ENCODE measurements at regions of chr11 and their contacts with region 1.

Region 1: GRCh38 chr11:94543695-94544645 is at the start of gene FUT4:
- DNase-seq: peak; percentile 87
- ATAC-seq: peak; percentile 83
- H3K4me3 Mint-ChIP-seq: peak within 1 kb of the TSS; percentile 92
- H3K27ac Mint-ChIP-seq: peak within 1 kb of the TSS; percentile 99
- H3K4me1 Mint-ChIP-seq: peaks cover 39% of the 10 kb centered on the region
- H3K27me3 Mint-ChIP-seq: no peaks in the 10 kb centered on the region
- total RNA-seq, gene FUT4: 4.4 to 4.9 TPM

Region 2: DNA sequence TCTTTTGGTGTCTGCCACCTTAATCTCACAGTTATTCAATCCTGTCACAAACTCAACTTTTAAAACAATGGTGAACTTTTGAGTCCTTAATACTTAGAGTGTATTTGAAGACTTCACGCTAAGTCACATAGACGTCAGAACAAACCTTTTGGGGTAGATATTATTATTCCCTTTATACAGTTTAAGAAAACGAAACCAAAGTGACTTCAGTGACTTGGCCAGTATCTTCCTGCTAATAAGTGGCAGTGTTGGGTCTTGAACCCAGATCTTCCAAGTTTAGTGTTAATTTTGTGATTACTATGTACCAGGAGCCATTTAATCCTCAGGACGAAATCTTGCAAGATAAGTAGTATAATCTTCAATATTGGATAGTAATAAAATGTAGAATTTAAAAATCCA is 881.8 kb before region 1 on chr11:
- CTCF ChIA-PET with region 1: no interaction called
- POLR2A ChIA-PET with region 1: no interaction called
- intact Hi-C with region 1: loop called in 1 of 2 experiments (anchors 5 kb)
- DNase-seq: no peak
- ATAC-seq: no peak
- H3K4me3 Mint-ChIP-seq: peak overlapping the region; percentile 94
- H3K27ac Mint-ChIP-seq: peak overlapping the region; percentile 95
- H3K4me1 Mint-ChIP-seq: peaks cover 44% of the 10 kb centered on the region
- H3K27me3 Mint-ChIP-seq: no peaks in the 10 kb centered on the region

Region 3: GRCh38 chr11:94493281-94494125 is 50.5 kb before region 1 on chr11 and contains the starts of genes ANKRD49 and MRE11:
- CTCF ChIA-PET with region 1: no interaction called
- POLR2A ChIA-PET with region 1: no interaction called
- intact Hi-C with region 1: loop called (anchors 1 to 5 kb)
- DNase-seq: peak; percentile 97
- ATAC-seq: peak; percentile 100
- H3K4me3 Mint-ChIP-seq: peak within 1 kb of the TSS; percentile 94
- H3K27ac Mint-ChIP-seq: peak within 1 kb of the TSS; percentile 97
- H3K4me1 Mint-ChIP-seq: peaks cover 24% of the 10 kb centered on the region
- H3K27me3 Mint-ChIP-seq: no peaks in the 10 kb centered on the region
- total RNA-seq, gene ANKRD49: 20.8 to 22.4 TPM
- total RNA-seq, gene MRE11: 36.8 to 51.3 TPM

Region 4: DNA sequence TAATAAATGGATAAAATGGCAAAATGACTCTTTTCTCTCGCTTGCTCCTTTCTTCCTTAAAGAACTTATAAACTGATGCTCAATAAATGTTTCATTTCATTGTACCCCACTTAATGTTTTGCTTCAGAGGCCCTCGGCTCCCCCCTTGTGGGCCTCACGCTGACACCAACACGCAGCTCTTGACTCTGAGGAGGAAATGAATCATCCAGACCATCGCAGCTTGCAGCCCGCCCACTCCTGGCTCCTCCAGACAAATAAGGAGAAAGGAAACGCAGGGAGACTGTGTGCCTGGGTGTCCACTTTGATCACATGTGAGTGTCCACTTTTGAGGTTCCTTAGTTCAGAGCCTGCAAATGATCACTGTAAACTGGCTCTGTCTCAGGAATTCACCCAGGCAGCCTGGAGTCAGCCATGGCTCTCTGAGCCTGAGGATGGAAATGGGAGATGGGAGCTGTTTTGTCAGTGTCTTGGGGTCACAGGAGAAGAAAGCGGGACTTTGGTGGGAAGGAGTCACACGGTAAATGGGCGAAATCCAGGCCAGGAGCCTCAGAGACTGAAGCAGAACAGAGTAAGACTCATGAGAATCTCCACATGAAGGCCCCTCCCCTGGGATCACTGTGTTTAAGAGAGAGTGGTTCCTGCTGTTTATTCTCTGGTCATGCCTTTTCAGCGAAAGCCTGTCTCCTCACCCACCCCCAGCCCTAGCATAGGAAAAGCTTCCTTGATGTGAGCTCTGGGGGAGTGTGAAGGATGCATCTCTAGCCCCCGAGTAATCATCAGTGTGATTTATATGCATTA is 332.9 kb after region 1 on chr11:
- CTCF ChIA-PET with region 1: no interaction called
- POLR2A ChIA-PET with region 1: no interaction called
- intact Hi-C with region 1: loop called in 1 of 2 experiments (anchors 5 kb)
- DNase-seq: peak; percentile 88
- ATAC-seq: peak; percentile 96
- H3K4me3 Mint-ChIP-seq: peak overlapping the region; percentile 19
- H3K27ac Mint-ChIP-seq: peak overlapping the region; percentile 82
- H3K4me1 Mint-ChIP-seq: peaks cover 23% of the 10 kb centered on the region
- H3K27me3 Mint-ChIP-seq: peaks cover 2% of the 10 kb centered on the region

Region 5: GRCh38 chr11:95790123-95790932 is 1246.4 kb after region 1 on chr11 and contains the start of gene CEP57:
- CTCF ChIA-PET with region 1: no interaction called
- POLR2A ChIA-PET with region 1: no interaction called
- intact Hi-C with region 1: loop called in 1 of 2 experiments (anchors 5 kb)
- DNase-seq: peak; percentile 98
- ATAC-seq: peak; percentile 67
- H3K4me3 Mint-ChIP-seq: peak within 1 kb of the TSS; percentile 99
- H3K27ac Mint-ChIP-seq: peak within 1 kb of the TSS; percentile 100
- H3K4me1 Mint-ChIP-seq: peaks cover 53% of the 10 kb centered on the region
- H3K27me3 Mint-ChIP-seq: no peaks in the 10 kb centered on the region
- total RNA-seq, gene CEP57: 101 to 134 TPM

Measured in activated CD4-positive, alpha-beta T cell treated with anti-CD3 and anti-CD28 coated beads for 36 hours (primary cell).